ENCODE measurements at regions of chr10 and their contacts with region 1.

Region 1: GRCh38 chr10:67666416-67667034 is 29.5 kb downstream of the CTNNA3 start:
- DNase-seq: peak; percentile 55

Region 2: GRCh38 chr10:67779465-67780203 is 113.1 kb after region 1 on chr10:
- in situ Hi-C with region 1: loop called (anchors 25 kb)
- DNase-seq: peak; percentile 77